Right lobe of liver (tissue), 6 donors: ENCODE measurements at regions of chr2 and their contacts with region 1.

Region 1: GRCh38 chr2:207632575-207633493 is 7.6 kb upstream of the METTL21A start:
- DNase-seq: no peak
- ATAC-seq: peak; percentile 72 to 92 (median 89)
- H3K4me3 ChIP-seq: no peak overlapping the region
- H3K27ac ChIP-seq: peak overlapping the region in 1 of 3 donors; percentile 58
- H3K4me1 ChIP-seq: peaks cover 0 to 12% (median 3%) of the 10 kb centered on the region in 4 donors
- H3K27me3 ChIP-seq: no peaks in the 10 kb centered on the region
- CTCF ChIP-seq: no peak
- POLR2A ChIP-seq: no peak

Region 2: GRCh38 chr2:207408086-207408794 is 224.6 kb before region 1 on chr2:
- intact Hi-C with region 1: no loop called
- DNase-seq: peak in 2 of 3 donors; percentile 50 to 60
- ATAC-seq: peak; percentile 84 to 95 (median 90)
- H3K4me3 ChIP-seq: no peak overlapping the region
- H3K27ac ChIP-seq: no peak overlapping the region
- H3K4me1 ChIP-seq: peaks cover 0 to 9% (median 3%) of the 10 kb centered on the region in 4 donors
- H3K27me3 ChIP-seq: no peaks in the 10 kb centered on the region
- CTCF ChIP-seq: no peak
- POLR2A ChIP-seq: no peak

Region 3: GRCh38 chr2:207432453-207432852 is 200.4 kb before region 1 on chr2:
- intact Hi-C with region 1: no loop called
- DNase-seq: no peak
- ATAC-seq: no peak
- H3K4me3 ChIP-seq: no peak overlapping the region
- H3K27ac ChIP-seq: no peak overlapping the region
- H3K4me1 ChIP-seq: no peaks in the 10 kb centered on the region
- H3K27me3 ChIP-seq: no peaks in the 10 kb centered on the region
- CTCF ChIP-seq: no peak
- POLR2A ChIP-seq: no peak

Region 4: DNA sequence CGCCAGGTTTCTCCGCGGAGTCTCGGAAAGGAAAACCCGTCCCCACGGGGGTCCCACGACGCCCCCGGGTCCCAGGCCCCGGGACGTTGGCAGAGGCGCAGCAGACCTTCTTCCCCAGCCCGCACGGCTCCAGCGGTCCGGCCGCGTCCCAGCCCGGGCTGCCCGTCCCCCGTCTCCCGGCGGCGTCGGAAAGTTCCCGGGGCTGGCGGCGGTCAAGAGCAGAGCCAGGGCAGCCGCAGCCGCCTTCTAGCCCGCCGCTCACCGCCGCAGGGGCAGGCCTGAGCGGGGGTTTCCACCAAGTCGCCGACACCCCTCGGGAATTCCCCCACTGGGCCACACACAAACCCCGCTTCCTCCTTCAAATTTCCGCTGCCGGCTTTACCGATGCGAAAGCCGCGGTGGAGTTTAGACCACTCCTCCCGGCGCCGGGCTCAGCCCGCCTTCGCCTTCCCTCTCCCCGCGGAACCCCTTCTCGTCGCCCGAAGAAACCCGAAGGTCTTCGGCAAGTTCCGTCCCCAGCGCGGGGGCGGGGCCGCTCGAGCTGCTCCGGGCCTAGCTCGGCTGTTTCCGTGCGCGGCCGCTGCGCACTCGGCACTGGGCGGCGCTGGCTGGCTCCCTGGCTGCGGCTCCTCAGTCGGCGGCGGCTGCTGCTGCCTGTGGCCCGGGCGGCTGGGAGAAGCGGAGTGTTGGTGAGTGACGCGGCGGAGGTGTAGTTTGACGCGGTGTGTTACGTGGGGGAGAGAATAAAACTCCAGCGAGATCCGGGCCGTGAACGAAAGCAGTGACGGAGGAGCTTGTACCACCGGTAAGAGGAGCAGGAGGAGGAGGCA is 103.3 kb before region 1 on chr2 and contains the start of gene CREB1:
- intact Hi-C with region 1: loop called in 1 of 2 experiments (anchors 10 kb)
- DNase-seq: peak; percentile 97 to 98 (median 98)
- ATAC-seq: peak; percentile 92 to 98 (median 94)
- H3K4me3 ChIP-seq: peak within 1 kb of the TSS; percentile 65 to 73 (median 70)
- H3K27ac ChIP-seq: peak within 1 kb of the TSS; percentile 88 to 97 (median 97)
- H3K4me1 ChIP-seq: peaks cover 3 to 27% (median 16%) of the 10 kb centered on the region in 4 donors
- H3K27me3 ChIP-seq: no peaks in the 10 kb centered on the region
- CTCF ChIP-seq: peak in 3 of 4 donors; percentile 5 to 26 (median 8)
- POLR2A ChIP-seq: peak; percentile 98
- total RNA-seq, gene CREB1: 10.1 to 22.6 (median 16.8) TPM

Region 5: DNA sequence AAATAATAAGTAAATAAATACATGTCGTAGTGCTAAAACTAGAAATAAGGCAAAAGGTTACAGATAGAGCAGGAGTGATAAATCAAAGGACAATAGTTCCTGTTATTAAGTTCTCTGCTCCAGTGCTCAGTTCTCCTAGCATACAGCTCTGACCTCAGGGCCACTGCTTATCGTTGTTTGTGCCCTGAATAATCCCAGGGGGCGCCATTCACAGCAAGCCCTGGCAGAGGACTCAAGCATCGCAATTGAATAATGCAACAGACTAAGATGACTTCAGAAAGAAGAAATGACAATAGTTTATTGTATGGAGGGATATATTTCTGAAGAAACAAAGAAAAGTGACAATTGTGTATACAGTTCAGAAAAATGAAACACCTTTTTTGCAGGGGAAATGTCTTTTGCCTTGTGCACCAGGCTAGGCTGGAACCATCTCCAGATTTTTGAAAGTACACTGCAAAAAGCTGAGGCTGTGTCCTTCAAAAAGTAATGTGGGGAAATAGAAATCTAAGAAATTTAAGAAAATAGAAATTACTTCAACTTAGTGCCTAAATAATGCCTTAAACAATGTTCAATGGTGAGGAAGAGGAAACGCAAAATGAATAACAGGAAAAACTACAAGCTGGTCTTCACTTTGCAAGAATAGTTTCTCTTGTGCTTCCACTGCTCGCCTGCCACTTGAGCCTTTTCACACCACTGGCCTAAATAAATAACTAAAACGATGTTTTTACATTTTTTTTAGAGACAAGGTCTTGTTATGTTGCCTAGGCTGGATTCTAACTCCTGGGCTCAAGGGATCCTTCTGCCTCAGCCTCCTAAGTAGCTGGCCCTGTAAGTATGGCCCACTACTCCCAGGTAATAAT is 59.6 kb after region 1 on chr2:
- intact Hi-C with region 1: loop called in 1 of 2 experiments (anchors 10 kb)
- DNase-seq: peak in 2 of 3 donors; percentile 35 to 61
- ATAC-seq: peak; percentile 93 to 96 (median 94)
- H3K4me3 ChIP-seq: no peak overlapping the region
- H3K27ac ChIP-seq: no peak overlapping the region
- H3K4me1 ChIP-seq: no peaks in the 10 kb centered on the region
- H3K27me3 ChIP-seq: no peaks in the 10 kb centered on the region
- CTCF ChIP-seq: peak; percentile 48 to 59 (median 56)
- POLR2A ChIP-seq: no peak